Activated CD4-positive, alpha-beta T cell treated with anti-CD3 and anti-CD28 coated beads for 36 hours (primary cell): ENCODE measurements at regions of chr3 and their contacts with region 1.

Region 1: DNA sequence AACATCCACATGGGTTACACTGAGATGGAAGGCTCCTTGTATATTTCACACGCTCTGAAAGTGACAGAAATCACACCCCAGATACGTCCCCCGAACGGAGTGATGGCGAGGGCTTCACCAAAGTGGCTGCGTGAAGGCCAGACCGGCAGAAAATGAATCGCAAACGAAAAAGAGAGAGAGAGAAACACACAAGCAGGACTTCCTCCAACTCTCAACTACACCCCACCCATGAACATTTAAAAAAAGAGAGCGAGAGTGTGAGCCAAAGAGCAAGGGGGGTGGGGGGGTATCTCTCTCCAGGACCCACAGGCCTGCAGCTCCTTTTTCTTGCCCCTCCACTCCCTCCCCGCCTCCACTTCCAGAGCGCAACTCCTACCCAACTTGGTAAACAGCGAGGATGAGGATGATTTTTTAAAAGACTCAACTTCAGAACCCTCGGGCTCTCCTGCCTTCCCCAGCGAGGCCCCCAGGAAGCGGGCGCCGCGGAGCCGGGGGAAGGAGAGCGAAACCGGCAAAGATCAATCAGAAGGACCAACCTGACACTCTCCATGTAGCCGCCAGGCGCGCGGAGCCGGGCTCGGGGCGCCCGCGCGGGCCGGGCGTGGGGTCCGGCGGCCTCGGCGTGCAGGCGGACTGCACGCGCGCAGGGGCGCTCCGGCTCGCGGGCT is 519.1 kb downstream of the FOXP1 start:
- DNase-seq: peak; percentile 79
- ATAC-seq: peak; percentile 11
- H3K4me3 Mint-ChIP-seq: no peak overlapping the region
- H3K27ac Mint-ChIP-seq: no peak overlapping the region
- H3K4me1 Mint-ChIP-seq: peaks cover 63% of the 10 kb centered on the region
- H3K27me3 Mint-ChIP-seq: no peaks in the 10 kb centered on the region

Region 2: DNA sequence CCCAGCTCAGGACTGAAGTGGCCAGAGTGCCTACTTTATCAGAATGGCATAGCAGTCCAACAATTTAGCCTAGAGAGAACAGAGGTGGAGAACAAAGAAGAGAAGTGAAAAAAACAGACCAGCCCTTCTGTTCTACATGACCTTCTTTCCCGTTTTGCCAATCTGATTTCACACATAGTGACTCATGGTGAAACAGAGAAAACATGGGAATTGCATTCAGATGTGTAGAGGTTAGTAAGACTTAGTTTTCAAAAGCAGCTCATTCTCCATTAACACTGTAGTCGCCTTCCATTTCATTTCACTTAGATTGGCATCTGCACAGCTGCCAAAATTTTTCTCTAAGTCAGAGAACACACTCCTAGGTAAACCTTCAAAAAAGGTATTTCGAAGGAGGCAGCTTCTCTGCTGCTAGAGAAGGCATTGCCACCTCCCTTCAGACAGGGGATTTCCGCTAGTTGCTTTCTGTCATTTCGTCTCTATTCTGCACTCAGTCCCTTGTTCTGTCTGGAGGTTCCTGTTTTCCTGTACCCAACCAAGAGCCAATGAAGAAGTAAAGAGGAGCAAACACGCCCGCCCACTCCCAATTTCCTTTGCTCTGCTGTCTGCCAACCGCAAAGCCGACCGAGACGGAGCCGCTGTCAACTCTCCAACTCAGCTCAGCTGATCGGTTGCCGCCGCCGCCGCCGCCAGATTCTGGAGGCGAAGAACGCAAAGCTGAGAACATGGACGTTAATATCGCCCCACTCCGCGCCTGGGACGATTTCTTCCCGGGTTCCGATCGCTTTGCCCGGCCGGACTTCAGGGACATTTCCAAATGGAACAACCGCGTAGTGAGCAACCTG is 1979.9 kb before region 1 on chr3 and contains the start of gene ARL6IP5:
- CTCF ChIA-PET with region 1: no interaction called
- POLR2A ChIA-PET with region 1: no interaction called
- intact Hi-C with region 1: loop called in 1 of 2 experiments (anchors 10 kb)
- DNase-seq: peak; percentile 97
- ATAC-seq: peak; percentile 48
- H3K4me3 Mint-ChIP-seq: peak within 1 kb of the TSS; percentile 90
- H3K27ac Mint-ChIP-seq: peak within 1 kb of the TSS; percentile 97
- H3K4me1 Mint-ChIP-seq: peaks cover 59% of the 10 kb centered on the region
- H3K27me3 Mint-ChIP-seq: no peaks in the 10 kb centered on the region
- total RNA-seq, gene ARL6IP5: 60.4 to 76.0 TPM

Region 3: GRCh38 chr3:70856414-70857162 is 207.8 kb before region 1 on chr3:
- CTCF ChIA-PET with region 1: no interaction called
- POLR2A ChIA-PET with region 1: no interaction called
- intact Hi-C with region 1: loop called in 1 of 2 experiments (anchors 5 kb)
- DNase-seq: peak; percentile 8
- ATAC-seq: peak; percentile 84
- H3K4me3 Mint-ChIP-seq: no peak overlapping the region
- H3K27ac Mint-ChIP-seq: no peak overlapping the region
- H3K4me1 Mint-ChIP-seq: peaks cover 24% of the 10 kb centered on the region
- H3K27me3 Mint-ChIP-seq: peaks cover 33% of the 10 kb centered on the region

Region 4: GRCh38 chr3:71050538-71051258 is 13.7 kb before region 1 on chr3:
- CTCF ChIA-PET with region 1: interaction called, 9 read pairs
- POLR2A ChIA-PET with region 1: interaction called, 5 read pairs
- intact Hi-C with region 1: loop called (anchors 1 kb)
- DNase-seq: peak; percentile 65
- ATAC-seq: peak; percentile 87
- H3K4me3 Mint-ChIP-seq: peak overlapping the region; percentile 36
- H3K27ac Mint-ChIP-seq: peak overlapping the region; percentile 92
- H3K4me1 Mint-ChIP-seq: peaks cover 100% of the 10 kb centered on the region
- H3K27me3 Mint-ChIP-seq: no peaks in the 10 kb centered on the region

Region 5: GRCh38 chr3:71130471-71131374 is 66.3 kb after region 1 on chr3:
- CTCF ChIA-PET with region 1: interaction called, 5 read pairs
- POLR2A ChIA-PET with region 1: no interaction called
- intact Hi-C with region 1: loop called (anchors 1 to 2 kb)
- DNase-seq: peak; percentile 82
- ATAC-seq: peak; percentile 61
- H3K4me3 Mint-ChIP-seq: peak overlapping the region; percentile 90
- H3K27ac Mint-ChIP-seq: peak overlapping the region; percentile 99
- H3K4me1 Mint-ChIP-seq: peaks cover 71% of the 10 kb centered on the region
- H3K27me3 Mint-ChIP-seq: no peaks in the 10 kb centered on the region

Region 6: DNA sequence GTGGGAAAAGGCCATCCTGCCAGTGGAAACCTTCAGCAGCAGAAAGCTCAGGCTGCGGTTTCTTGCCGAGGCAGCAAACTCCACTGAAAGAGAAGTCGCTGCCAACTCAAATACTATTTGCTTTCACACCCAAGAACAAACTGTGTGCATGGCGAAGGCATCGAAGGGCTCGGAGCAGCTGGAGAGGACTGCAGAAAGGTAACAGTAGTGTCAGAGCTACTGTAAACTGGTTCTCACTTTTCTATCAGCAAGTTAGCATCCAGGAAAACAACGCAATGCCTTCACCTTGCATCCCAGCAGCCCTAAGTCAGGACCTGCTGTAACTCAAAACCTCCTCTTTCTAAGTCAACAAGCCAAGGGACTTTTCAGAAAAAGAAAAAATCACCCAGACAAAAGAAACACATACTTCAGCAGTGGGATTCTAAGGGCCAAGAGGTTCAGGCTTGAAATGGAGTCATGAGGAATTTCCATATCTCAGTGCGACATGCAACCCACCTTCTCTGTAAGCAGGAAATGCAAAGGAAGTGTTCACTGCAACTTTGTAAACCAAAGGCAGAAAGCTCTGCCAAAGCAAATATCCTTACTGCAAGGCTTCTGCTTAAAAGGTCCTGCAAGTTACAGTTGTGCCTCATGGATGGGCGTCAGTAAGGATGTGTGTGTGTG is 325.6 kb after region 1 on chr3:
- CTCF ChIA-PET with region 1: interaction called, 3 read pairs
- POLR2A ChIA-PET with region 1: no interaction called
- intact Hi-C with region 1: loop called in 1 of 2 experiments (anchors 5 kb)
- DNase-seq: peak; percentile 52
- ATAC-seq: peak; percentile 18
- H3K4me3 Mint-ChIP-seq: peak overlapping the region; percentile 52
- H3K27ac Mint-ChIP-seq: peak overlapping the region; percentile 69
- H3K4me1 Mint-ChIP-seq: peaks cover 78% of the 10 kb centered on the region
- H3K27me3 Mint-ChIP-seq: no peaks in the 10 kb centered on the region

Region 7: DNA sequence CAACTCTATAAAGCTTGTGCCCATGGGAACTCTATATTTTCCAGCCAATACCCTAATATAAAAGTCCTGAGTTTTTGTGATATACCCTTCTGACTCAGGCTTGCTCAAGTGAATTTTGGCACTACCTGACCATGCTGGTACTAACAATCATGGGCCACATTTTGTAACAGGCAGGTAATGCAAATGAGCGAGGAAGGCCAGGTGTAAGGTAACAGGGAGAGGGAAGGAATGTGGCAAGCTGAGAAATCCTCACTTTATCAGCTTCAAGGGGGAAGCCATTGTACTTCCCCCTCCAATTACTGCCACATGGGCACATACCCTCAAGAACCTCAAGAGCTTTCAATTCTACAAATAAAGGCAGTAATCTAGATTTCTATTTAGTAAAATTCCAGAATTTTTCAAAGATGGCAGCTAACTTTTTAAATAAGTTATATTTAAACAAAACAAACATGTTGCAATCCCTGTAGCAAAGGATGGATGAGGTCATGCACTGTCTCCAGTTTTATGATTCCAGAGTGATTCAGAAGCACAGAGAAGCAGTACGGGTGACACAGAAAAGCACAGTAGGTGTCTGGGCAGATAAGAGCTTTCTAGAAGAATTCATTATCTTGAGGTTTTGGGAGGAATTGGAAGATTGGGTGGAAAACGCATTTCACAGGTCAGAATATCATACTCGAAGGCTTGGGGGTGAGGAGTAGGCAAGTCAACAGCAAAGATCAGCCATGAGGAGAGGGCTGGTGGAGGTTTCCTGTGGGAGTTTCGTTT is 431.5 kb after region 1 on chr3:
- CTCF ChIA-PET with region 1: interaction called, 3 read pairs
- POLR2A ChIA-PET with region 1: no interaction called
- intact Hi-C with region 1: loop called in 1 of 2 experiments (anchors 5 kb)
- DNase-seq: peak; percentile 47
- ATAC-seq: peak; percentile 71
- H3K4me3 Mint-ChIP-seq: peak overlapping the region; percentile 56
- H3K27ac Mint-ChIP-seq: peak overlapping the region; percentile 89
- H3K4me1 Mint-ChIP-seq: peaks cover 75% of the 10 kb centered on the region
- H3K27me3 Mint-ChIP-seq: no peaks in the 10 kb centered on the region